ENCODE measurements at regions of chr5 and their contacts with region 1.

Region 1: DNA sequence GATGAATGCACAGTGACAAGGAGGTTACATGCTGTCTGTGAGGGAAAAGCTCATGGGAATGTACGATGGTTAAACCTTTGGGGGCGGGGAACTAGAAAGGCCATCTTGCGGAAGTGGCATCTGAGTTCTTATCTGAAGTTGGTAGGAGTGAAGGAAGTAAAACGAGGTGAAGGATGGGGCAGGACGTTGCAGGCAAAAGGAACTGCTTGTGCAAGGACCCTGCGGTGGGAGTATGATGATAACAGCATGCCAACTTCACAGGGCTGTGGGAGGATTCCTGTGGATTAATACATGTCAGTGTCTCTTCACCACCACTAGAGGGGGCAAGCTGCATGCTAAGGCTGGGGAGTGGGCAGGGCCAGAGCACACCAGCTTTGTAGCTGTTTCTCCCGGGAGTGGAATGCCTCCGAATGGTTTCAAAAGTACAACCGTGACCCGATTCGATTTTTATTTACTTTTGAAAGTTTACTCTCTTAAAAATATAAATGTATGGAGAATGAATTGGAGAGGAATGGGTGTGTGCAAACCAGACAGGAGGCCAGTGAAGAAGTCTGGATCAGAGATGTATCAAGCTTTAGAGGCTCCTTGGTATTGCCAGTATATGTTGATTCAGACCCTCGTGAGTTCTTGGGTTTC is 62.5 kb downstream of the CYFIP2 start:
- DNase-seq: peak; percentile 69
- ATAC-seq: peak; percentile 97
- H3K4me3 Mint-ChIP-seq: no peak overlapping the region
- H3K27ac Mint-ChIP-seq: peak overlapping the region; percentile 49
- H3K4me1 Mint-ChIP-seq: peaks cover 49% of the 10 kb centered on the region
- H3K27me3 Mint-ChIP-seq: no peaks in the 10 kb centered on the region
- CTCF ChIP-seq: peak; percentile 83

Region 2: DNA sequence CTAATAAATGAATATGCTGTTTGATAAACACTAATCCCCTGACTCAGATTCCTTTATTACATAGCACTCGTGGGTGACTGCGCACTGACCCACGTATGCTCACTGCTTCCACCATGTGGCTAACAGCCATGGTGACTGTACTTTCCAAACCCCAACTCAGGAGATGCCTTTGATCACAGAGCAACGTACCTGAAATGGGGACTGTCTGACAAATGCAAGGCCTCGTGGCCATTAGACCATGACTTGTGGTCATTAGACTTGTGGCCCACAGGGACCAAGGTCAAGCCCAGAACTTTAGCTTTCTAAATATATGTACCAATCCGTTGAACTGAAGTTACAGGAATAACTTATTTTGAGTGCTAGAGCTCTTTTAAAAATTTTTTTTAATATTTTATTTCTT is 15.9 kb before region 1 on chr5:
- CTCF ChIA-PET with region 1: interaction called, 124 read pairs
- POLR2A ChIA-PET with region 1: no interaction called
- intact Hi-C with region 1: no loop called
- DNase-seq: peak; percentile 77
- ATAC-seq: peak; percentile 94
- H3K4me3 Mint-ChIP-seq: no peak overlapping the region
- H3K27ac Mint-ChIP-seq: peak overlapping the region; percentile 91
- H3K4me1 Mint-ChIP-seq: peaks cover 41% of the 10 kb centered on the region
- H3K27me3 Mint-ChIP-seq: no peaks in the 10 kb centered on the region
- CTCF ChIP-seq: peak; percentile 78

Region 3: GRCh38 chr5:157354800-157355199 is 26.4 kb after region 1 on chr5:
- CTCF ChIA-PET with region 1: interaction called, 35 read pairs
- POLR2A ChIA-PET with region 1: no interaction called
- intact Hi-C with region 1: no loop called
- DNase-seq: no peak
- ATAC-seq: no peak
- H3K4me3 Mint-ChIP-seq: no peak overlapping the region
- H3K27ac Mint-ChIP-seq: no peak overlapping the region
- H3K4me1 Mint-ChIP-seq: peaks cover 37% of the 10 kb centered on the region
- H3K27me3 Mint-ChIP-seq: no peaks in the 10 kb centered on the region
- CTCF ChIP-seq: no peak

Region 4: GRCh38 chr5:157370967-157371366 is 42.6 kb after region 1 on chr5:
- CTCF ChIA-PET with region 1: interaction called, 18 read pairs
- POLR2A ChIA-PET with region 1: no interaction called
- intact Hi-C with region 1: no loop called
- DNase-seq: no peak
- ATAC-seq: no peak
- H3K4me3 Mint-ChIP-seq: no peak overlapping the region
- H3K27ac Mint-ChIP-seq: peak overlapping the region; percentile 79
- H3K4me1 Mint-ChIP-seq: peaks cover 13% of the 10 kb centered on the region
- H3K27me3 Mint-ChIP-seq: no peaks in the 10 kb centered on the region
- CTCF ChIP-seq: no peak

Region 5: GRCh38 chr5:157476702-157477408 is 148.5 kb after region 1 on chr5:
- CTCF ChIA-PET with region 1: interaction called, 59 read pairs
- POLR2A ChIA-PET with region 1: no interaction called
- intact Hi-C with region 1: loop called (anchors 10 kb)
- DNase-seq: peak; percentile 52
- ATAC-seq: peak; percentile 82
- H3K4me3 Mint-ChIP-seq: no peak overlapping the region
- H3K27ac Mint-ChIP-seq: no peak overlapping the region
- H3K4me1 Mint-ChIP-seq: no peaks in the 10 kb centered on the region
- H3K27me3 Mint-ChIP-seq: no peaks in the 10 kb centered on the region
- CTCF ChIP-seq: peak; percentile 90

Region 6: GRCh38 chr5:157743163-157744050 is 415.0 kb after region 1 on chr5 and contains the start of gene LSM11:
- CTCF ChIA-PET with region 1: interaction called, 12 read pairs
- POLR2A ChIA-PET with region 1: no interaction called
- intact Hi-C with region 1: no loop called
- DNase-seq: peak; percentile 93
- ATAC-seq: peak; percentile 96
- H3K4me3 Mint-ChIP-seq: peak within 1 kb of the TSS; percentile 95
- H3K27ac Mint-ChIP-seq: peak within 1 kb of the TSS; percentile 87
- H3K4me1 Mint-ChIP-seq: peaks cover 36% of the 10 kb centered on the region
- H3K27me3 Mint-ChIP-seq: no peaks in the 10 kb centered on the region
- CTCF ChIP-seq: peak; percentile 98
- total RNA-seq, gene LSM11: 7.0 to 7.3 TPM